ENCODE measurements at regions of chr13 and their contacts with region 1.

Region 1: DNA sequence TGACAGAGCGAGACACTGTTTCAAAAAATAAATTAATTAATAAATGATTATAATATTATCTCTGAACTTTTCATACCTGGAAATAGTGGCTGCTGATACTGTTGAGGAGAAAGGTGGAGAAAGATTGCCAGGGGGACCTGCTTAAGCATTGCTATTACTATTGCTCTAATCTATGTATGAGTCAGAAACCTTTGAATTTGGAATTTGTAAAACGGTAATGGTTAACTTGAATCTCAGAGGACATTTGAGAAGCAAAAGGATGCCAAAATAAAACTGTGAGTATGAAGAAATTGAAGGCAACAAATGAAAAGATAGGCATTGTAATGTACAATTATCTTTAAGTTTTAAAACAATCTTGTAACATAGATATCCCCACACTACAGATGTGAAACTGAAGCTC is 5.2 kb downstream of the MRPL57 start:
- DNase-seq: no peak
- ATAC-seq: no peak
- H3K4me3 ChIP-seq: no peak overlapping the region
- H3K27ac ChIP-seq: no peak overlapping the region
- H3K4me1 ChIP-seq: peaks cover 4 to 8% of the 10 kb centered on the region in 2 experiments; a peak in 2 of 5 replicates
- H3K27me3 ChIP-seq: no peaks in the 10 kb centered on the region
- CTCF ChIP-seq: no peak
- EP300 ChIP-seq: no peak
- POLR2A ChIP-seq: no peak
- RAD21 ChIP-seq: no peak

Region 2: GRCh38 chr13:21022056-21022979 is 159.4 kb before region 1 on chr13:
- CTCF ChIA-PET with region 1: interaction called, 8 read pairs
- POLR2A ChIA-PET with region 1: no interaction called
- in situ Hi-C with region 1: no loop called
- intact Hi-C with region 1: loop called (anchors 10 kb)
- DNase-seq: no peak
- ATAC-seq: no peak
- H3K4me3 ChIP-seq: no peak overlapping the region
- H3K27ac ChIP-seq: no peak overlapping the region
- H3K4me1 ChIP-seq: peaks cover 0 to 6% of the 10 kb centered on the region in 2 experiments; a peak in 2 of 5 replicates
- H3K27me3 ChIP-seq: no peaks in the 10 kb centered on the region
- CTCF ChIP-seq: no peak
- EP300 ChIP-seq: no peak
- POLR2A ChIP-seq: no peak
- RAD21 ChIP-seq: no peak

Region 3: GRCh38 chr13:21344662-21345176 is 163.0 kb after region 1 on chr13:
- CTCF ChIA-PET with region 1: no interaction called
- POLR2A ChIA-PET with region 1: no interaction called
- in situ Hi-C with region 1: no loop called
- intact Hi-C with region 1: no loop called
- DNase-seq: no peak
- ATAC-seq: peak; percentile 21; the same call in 2 of the 3 replicates
- H3K4me3 ChIP-seq: no peak overlapping the region
- H3K27ac ChIP-seq: no peak overlapping the region
- H3K4me1 ChIP-seq: no peaks in the 10 kb centered on the region; a peak in 1 of 5 replicates
- H3K27me3 ChIP-seq: peaks cover 0 to 8% of the 10 kb centered on the region in 2 experiments; a peak in 3 of 5 replicates
- CTCF ChIP-seq: no peak
- EP300 ChIP-seq: no peak
- POLR2A ChIP-seq: no peak
- RAD21 ChIP-seq: no peak